Mucosa of descending colon (tissue), 3 donors: ENCODE measurements at regions of chr18 and their contacts with region 1.

Region 1: GRCh38 chr18:35231052-35231451 is 9.8 kb upstream of the ZNF397 start:
- DNase-seq: peak; percentile 48 to 91 (median 80)
- ATAC-seq: peak; percentile 96
- H3K4me3 ChIP-seq: no peak overlapping the region
- H3K4me1 ChIP-seq: no peaks in the 10 kb centered on the region
- CTCF ChIP-seq: peak; percentile 92

Region 2: DNA sequence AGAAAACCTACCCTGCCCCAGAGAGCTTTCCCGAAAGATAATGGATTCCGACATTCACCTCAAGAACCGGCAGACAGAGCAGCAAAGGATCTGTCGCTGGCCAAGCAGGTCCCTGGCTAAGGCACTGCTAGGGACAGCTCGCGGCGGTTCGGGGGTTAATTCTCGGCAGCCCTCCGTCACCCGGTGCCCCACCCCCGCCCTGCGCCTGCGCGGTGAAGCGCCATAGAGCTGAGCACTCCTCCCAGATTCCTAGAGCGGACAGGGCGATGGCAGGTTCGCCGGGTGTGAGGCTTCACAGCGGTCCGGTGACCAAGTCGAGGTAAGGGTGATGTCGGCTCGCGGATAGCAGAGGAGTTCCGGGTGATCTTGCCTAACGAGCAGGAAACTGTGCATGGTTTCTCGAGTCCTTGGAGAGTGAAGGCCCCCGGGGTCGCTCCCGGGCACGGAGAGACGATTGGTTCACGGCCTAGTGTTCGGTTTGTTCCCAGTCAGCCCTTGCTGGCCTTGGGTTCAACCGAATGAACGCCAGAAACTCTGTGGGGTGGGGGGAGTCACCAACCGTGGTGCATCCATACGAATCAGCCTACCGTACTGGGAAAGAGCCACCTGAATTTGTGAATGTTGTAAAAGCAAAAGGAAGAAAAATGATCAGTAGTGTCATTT is 59.2 kb after region 1 on chr18 and contains the start of gene ZSCAN30:
- intact Hi-C with region 1: no loop called
- DNase-seq: peak; percentile 97 to 99 (median 97)
- ATAC-seq: peak; percentile 100
- H3K4me3 ChIP-seq: peak within 1 kb of the TSS; percentile 50
- H3K4me1 ChIP-seq: peaks cover 7% of the 10 kb centered on the region
- CTCF ChIP-seq: no peak
- total RNA-seq, gene ZSCAN30: 9.7 to 14.9 (median 14.3) TPM

Region 3: DNA sequence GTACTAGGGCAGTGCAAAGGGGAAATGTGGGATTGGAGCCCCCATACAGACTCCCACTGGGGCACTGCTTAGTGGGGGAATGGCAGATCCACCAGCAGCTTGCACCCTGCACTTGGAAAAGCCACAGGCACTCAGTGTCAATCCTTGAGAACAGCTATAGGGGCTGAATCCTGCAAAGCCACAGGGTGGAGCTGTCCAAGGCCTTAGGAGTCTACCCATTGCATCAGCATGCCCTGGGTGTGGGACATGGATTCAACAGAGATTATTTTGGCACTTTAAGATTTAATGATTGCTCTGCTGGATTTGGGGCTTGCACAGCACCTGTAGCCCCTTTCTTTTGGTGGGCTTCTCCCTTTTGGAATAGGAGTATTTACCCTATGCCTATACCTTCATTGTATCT is 121.7 kb after region 1 on chr18:
- intact Hi-C with region 1: loop called in 1 of 2 experiments (anchors 5 kb)
- DNase-seq: no peak
- ATAC-seq: no peak
- H3K4me3 ChIP-seq: no peak overlapping the region
- H3K4me1 ChIP-seq: no peaks in the 10 kb centered on the region
- CTCF ChIP-seq: no peak

Region 4: DNA sequence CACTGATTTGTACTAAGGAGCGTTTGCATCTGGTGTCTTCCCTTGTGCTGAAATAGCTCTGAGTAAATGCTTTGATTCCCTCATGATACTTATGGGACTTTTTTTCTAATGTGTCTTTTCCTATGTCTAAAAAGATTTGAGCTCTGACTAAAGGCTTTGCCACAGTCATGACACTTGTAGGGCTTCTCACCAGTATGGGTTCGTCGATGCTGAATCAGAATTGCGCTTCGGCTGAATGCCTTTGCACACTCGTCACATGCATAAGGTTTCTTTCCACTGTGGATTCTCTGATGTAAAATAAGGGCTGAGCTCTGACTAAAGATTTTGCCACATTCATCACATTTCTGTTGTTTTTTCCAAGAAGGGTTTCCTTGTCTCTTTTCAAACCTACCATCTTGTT is 138.1 kb after region 1 on chr18:
- intact Hi-C with region 1: loop called in 1 of 2 experiments (anchors 10 kb)
- DNase-seq: no peak
- ATAC-seq: no peak
- H3K4me3 ChIP-seq: no peak overlapping the region
- H3K4me1 ChIP-seq: no peaks in the 10 kb centered on the region
- CTCF ChIP-seq: no peak